Caco-2 (cell line): ENCODE measurements at regions of chr11 and their contacts with region 1.

Region 1: DNA sequence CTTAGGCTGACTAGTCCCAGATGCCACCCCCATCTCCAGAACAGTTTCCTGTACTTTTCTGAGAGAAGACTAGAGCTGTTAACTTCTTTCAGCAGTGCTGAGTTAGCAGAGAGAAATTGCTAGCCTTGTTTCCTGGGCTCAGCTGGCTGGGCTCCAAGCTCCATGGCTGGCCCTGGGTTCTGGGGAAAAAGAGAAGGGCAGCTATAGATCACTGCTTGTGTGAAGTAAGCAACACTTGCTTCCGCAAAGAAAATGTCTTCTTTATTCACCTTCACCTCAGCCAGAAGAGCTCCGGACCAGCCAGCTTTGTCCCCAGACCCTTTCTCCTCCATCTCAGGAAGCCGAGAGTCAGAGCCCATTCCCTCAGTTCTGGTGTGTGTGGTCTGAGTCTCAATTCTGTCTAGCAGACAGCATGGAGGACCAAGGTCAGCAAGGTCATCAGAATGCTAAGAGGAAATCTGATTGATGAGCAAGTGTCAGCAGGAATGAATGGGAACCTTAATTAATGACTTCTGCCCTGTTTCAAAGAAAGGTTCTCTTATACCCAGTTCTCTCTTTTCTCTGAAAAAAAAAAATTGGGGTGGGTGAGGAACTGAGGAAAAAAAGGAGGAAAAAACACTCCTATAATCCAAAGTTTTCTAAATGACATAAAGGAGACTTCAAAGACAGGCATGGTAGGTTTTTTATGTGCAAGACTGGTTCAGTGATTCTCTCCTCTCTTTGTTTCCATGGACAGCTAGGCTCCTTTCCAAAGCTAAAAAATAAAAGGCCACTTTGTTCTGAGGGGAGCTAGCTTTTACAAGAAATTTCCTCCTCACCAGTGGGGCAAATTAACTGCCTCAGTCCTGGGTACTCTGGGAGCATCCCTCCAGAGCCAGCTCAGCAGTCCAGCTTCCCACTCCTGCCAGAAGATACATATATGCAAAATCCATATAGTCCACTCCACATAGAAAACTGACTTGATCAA is 63.6 kb upstream of the FAM181B start:
- DNase-seq: no peak
- H3K4me3 ChIP-seq: no peak overlapping the region
- H3K4me3 Mint-ChIP-seq: no peak overlapping the region
- H3K27ac Mint-ChIP-seq: no peak overlapping the region
- H3K4me1 ChIP-seq: no peaks in the 10 kb centered on the region
- H3K4me1 Mint-ChIP-seq: no peaks in the 10 kb centered on the region
- H3K27me3 ChIP-seq: no peaks in the 10 kb centered on the region
- H3K27me3 Mint-ChIP-seq: peaks cover 27% of the 10 kb centered on the region
- CTCF ChIP-seq: no peak

Region 2: DNA sequence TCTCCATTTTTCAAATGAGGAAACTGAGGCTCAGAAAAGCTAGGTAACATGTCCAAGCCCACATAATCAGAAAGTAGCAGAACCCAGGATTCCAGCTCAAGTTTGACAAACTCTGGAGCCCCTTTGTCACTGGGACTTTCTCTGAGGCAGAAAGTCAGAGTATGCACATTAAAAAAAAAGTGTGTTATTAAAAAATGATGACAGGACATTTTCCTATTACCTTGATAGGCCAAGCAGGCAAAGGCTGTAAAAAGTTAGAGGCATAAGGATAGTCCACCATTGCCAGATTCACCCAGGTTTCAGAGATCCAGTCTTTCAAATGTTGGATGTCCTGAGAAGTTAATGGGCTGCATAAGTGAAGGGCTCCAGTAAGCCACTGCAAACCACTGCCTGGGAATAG is 51.5 kb after region 1 on chr11:
- CTCF ChIA-PET with region 1: no interaction called
- POLR2A ChIA-PET with region 1: no interaction called
- intact Hi-C with region 1: loop called (anchors 1 kb)
- DNase-seq: no peak
- H3K4me3 ChIP-seq: no peak overlapping the region
- H3K4me3 Mint-ChIP-seq: no peak overlapping the region
- H3K27ac Mint-ChIP-seq: no peak overlapping the region
- H3K4me1 ChIP-seq: no peaks in the 10 kb centered on the region
- H3K4me1 Mint-ChIP-seq: no peaks in the 10 kb centered on the region
- H3K27me3 ChIP-seq: no peaks in the 10 kb centered on the region
- H3K27me3 Mint-ChIP-seq: no peaks in the 10 kb centered on the region
- CTCF ChIP-seq: no peak